Activated CD4-positive, alpha-beta T cell treated with anti-CD3 and anti-CD28 coated beads, Interleukin-2, amount 10 ng/mL, durations not matched to agents 24 days and 14 days (primary cell): ENCODE measurements at regions of chr2 and their contacts with region 1.

Region 1: GRCh38 chr2:165874445-165875039 is 79.0 kb downstream of the TTC21B start:
- DNase-seq: peak; percentile 76
- H3K4me3 Mint-ChIP-seq: no peak overlapping the region
- H3K27ac Mint-ChIP-seq: no peak overlapping the region
- H3K4me1 Mint-ChIP-seq: peaks cover 18% of the 10 kb centered on the region
- H3K27me3 Mint-ChIP-seq: no peaks in the 10 kb centered on the region

Region 2: DNA sequence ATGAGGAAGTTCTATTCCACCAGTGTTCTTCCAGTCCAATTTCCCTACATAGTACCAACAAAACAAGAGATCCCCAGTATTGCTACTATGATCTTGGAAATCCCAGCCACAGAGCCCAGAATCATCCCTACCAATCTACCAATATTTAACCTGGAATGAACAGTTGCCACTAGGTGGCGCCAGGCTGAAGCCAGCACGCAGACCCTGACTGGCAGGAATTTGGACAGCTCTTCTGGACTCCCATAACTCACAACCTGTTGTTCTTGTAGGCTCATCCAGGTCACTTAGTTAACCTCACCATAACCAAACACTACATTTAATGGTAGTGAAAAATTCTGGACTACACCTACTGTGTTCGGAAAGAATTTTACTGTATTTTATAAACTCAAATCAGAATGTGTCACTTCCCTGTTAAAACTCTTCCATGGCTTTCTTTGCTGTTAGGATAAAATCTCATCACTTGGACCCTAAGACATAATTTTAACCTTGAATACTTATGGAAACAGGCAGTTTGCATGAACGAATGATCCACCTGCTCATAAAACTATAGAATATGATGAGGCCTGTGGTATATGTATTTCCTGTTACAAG is 859.4 kb before region 1 on chr2:
- intact Hi-C with region 1: loop called (anchors 10 kb)
- DNase-seq: peak; percentile 85
- H3K4me3 Mint-ChIP-seq: no peak overlapping the region
- H3K27ac Mint-ChIP-seq: no peak overlapping the region
- H3K4me1 Mint-ChIP-seq: no peaks in the 10 kb centered on the region
- H3K27me3 Mint-ChIP-seq: peaks cover 4% of the 10 kb centered on the region

Region 3: DNA sequence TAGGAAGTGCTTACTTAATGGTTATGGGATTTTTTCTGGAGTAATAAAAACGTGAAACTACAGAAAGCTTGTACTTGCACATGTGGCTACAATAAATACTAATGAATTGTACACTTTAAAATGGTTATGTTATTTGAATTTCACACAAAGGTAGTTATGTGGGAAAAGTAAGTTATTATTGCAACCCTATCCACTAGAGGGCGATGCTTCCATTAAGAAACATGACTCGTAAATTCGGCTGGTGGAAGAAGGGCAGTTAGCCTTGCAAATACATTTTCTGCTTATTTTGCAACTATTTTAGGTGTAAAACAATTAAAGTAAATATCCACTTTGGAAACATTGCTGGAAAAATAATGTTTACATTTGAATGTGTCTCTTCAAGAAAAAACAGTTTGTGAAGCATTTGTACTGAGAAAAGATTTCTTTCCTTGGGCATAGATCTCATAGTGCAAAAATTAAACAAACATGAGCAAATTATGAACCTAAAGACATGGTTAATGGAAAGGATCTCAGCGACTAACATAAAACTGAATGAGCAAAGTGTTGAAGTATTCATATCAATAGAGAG is 473.2 kb before region 1 on chr2:
- intact Hi-C with region 1: loop called (anchors 1 kb)
- DNase-seq: peak; percentile 72
- H3K4me3 Mint-ChIP-seq: no peak overlapping the region
- H3K27ac Mint-ChIP-seq: no peak overlapping the region
- H3K4me1 Mint-ChIP-seq: peaks cover 5% of the 10 kb centered on the region
- H3K27me3 Mint-ChIP-seq: peaks cover 18% of the 10 kb centered on the region

Region 4: GRCh38 chr2:165505514-165505913 is 369.0 kb before region 1 on chr2:
- intact Hi-C with region 1: no loop called
- DNase-seq: no peak
- H3K4me3 Mint-ChIP-seq: no peak overlapping the region
- H3K27ac Mint-ChIP-seq: no peak overlapping the region
- H3K4me1 Mint-ChIP-seq: no peaks in the 10 kb centered on the region
- H3K27me3 Mint-ChIP-seq: no peaks in the 10 kb centered on the region

Region 5: DNA sequence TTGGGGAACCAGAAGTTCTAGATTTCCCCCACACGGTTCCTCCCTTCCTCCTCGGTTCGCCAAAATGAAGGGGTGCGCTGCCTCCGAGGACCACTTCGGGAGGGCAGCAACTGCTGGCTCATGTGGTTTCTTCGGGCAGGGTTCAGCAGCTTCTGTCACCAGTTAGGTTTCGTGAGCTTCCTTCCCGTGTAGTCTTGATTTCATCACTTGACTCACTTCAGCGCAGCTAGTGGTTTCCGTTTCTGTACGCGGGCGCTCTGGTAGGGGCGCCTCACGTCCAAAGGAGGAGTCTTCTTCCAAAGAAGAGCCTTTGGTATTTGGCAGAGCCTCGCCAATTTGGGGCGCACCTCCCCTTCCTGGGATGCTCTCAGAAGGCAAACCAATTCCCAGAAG is 80.0 kb before region 1 on chr2:
- intact Hi-C with region 1: loop called (anchors 2 kb)
- DNase-seq: peak; percentile 92
- H3K4me3 Mint-ChIP-seq: peak overlapping the region; percentile 83
- H3K27ac Mint-ChIP-seq: peak overlapping the region; percentile 94
- H3K4me1 Mint-ChIP-seq: peaks cover 38% of the 10 kb centered on the region
- H3K27me3 Mint-ChIP-seq: peaks cover 5% of the 10 kb centered on the region

Region 6: DNA sequence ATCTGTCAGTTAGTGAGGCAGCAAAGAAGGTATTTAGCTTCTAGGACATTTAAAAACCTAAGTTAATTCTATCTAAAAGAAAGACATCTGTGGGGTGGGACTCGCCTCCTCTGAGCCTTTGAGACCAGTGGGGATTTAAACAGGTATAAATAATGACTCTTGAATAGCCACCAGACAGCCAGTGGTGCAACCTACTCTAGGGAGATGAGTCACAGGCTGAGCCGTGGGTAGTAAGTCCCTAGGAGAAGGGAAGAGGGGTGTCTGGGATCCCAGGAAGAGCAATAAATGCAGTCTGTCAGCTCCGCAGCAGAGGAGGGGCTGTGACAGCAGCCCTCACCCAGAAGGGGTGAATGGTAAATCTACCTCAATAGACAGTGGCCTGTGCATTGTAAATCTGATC is 37.4 kb before region 1 on chr2:
- intact Hi-C with region 1: no loop called
- DNase-seq: no peak
- H3K4me3 Mint-ChIP-seq: no peak overlapping the region
- H3K27ac Mint-ChIP-seq: no peak overlapping the region
- H3K4me1 Mint-ChIP-seq: no peaks in the 10 kb centered on the region
- H3K27me3 Mint-ChIP-seq: peaks cover 3% of the 10 kb centered on the region

Region 7: GRCh38 chr2:165953655-165954606 is 79.4 kb after region 1 on chr2 and contains the start of gene TTC21B:
- intact Hi-C with region 1: loop called (anchors 2 kb)
- DNase-seq: peak; percentile 98
- H3K4me3 Mint-ChIP-seq: peak within 1 kb of the TSS; percentile 50
- H3K27ac Mint-ChIP-seq: no peak within 1 kb of the TSS
- H3K4me1 Mint-ChIP-seq: peaks cover 5% of the 10 kb centered on the region
- H3K27me3 Mint-ChIP-seq: no peaks in the 10 kb centered on the region
- total RNA-seq, gene TTC21B: 21.4 and 22.7 TPM in 2 replicates

Region 8: GRCh38 chr2:166246901-166247300 is 372.4 kb after region 1 on chr2:
- intact Hi-C with region 1: no loop called
- DNase-seq: no peak
- H3K4me3 Mint-ChIP-seq: no peak overlapping the region
- H3K27ac Mint-ChIP-seq: no peak overlapping the region
- H3K4me1 Mint-ChIP-seq: no peaks in the 10 kb centered on the region
- H3K27me3 Mint-ChIP-seq: no peaks in the 10 kb centered on the region